ENCODE measurements at regions of chr21 and their contacts with region 1.

Region 1: GRCh38 chr21:45129189-45129923 is 55.0 kb downstream of the ADARB1 start:
- ATAC-seq: peak in 3 of 8 experiments; percentile 28 to 69 (median 59)
- H3K4me3 ChIP-seq: no peak overlapping the region
- H3K27ac ChIP-seq: no peak overlapping the region
- H3K4me1 ChIP-seq: peaks cover 18 to 20% of the 10 kb centered on the region in 2 donors

Region 2: GRCh38 chr21:44939532-44940115 is 189.7 kb before region 1 on chr21 and contains the start of gene SLX9:
- in situ Hi-C with region 1: loop called in 4 of 9 experiments (anchors 10 to 25 kb)
- ATAC-seq: peak; percentile 93 to 98 (median 97)
- H3K4me3 ChIP-seq: peak within 1 kb of the TSS; percentile 67 to 100 (median 74)
- H3K27ac ChIP-seq: peak within 1 kb of the TSS; percentile 62 to 75
- H3K4me1 ChIP-seq: peaks cover 10 to 17% of the 10 kb centered on the region in 2 donors
- total RNA-seq, gene SLX9: 9.8 to 41.2 (median 15.3) TPM

Region 3: DNA sequence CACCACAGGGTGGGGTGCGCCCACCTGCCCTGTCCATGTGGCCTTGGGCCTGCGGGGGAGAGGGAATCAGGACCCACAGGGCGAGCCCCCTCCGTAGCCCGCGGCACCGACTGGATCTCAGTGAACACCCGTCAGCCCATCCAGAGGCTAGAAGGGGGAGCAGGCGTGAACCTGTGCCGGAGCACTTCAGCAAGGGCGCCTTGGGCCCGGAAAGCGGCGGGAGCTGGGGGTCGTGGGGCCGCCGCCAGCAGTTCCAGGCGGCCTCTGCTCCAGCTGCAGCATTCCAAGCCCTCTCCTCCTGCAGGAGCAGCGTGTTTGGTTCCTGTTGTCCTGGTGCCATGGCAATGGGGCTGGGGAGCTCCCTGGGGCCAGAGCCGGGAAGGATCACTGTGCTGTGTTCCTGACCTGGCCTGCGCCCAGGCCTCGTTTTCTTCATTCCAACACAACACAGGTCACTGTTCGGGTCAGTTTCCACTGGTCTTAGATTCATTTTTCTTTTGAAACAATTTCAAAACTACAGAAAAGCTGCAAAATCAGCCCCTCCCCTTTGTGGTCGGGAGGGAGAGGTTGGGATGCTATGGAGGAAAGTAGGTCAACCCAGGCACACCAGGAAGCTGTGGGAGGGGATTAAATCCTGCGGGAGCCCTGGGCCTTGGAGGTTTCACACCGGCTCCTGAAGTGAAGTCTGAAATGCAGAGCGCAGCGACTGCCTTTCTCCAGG is 170.7 kb before region 1 on chr21:
- in situ Hi-C with region 1: loop called in 4 of 9 experiments (anchors 5 to 25 kb)
- ATAC-seq: peak in 7 of 8 experiments; percentile 21 to 82 (median 51)
- H3K4me3 ChIP-seq: no peak overlapping the region
- H3K27ac ChIP-seq: peak overlapping the region in 1 of 2 donors; percentile 40
- H3K4me1 ChIP-seq: peaks cover 0 to 22% of the 10 kb centered on the region in 2 donors

Region 4: DNA sequence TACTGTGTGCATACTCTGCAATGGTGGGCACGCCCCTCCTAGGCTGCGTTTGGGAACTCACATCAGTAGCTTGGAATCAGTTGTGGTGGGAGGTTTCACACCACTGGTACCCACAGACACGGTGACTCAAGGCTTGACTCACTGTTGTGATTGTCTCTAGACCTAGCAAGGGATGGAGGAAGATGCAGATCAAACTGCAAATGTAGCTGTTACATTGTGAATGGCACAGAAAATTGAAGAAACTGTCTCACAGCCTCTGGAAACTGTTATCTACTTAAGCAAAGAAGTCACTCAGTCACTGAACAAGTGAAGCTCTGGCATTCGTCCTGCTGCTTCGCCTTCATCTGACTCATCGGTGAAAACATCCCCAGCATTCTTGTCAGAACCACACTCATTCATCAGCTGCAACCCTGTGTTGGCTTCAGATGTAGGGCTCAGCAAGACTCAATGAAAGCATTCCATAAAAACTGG is 98.8 kb after region 1 on chr21:
- in situ Hi-C with region 1: no loop called
- ATAC-seq: peak; percentile 21 to 92 (median 74)
- H3K4me3 ChIP-seq: no peak overlapping the region
- H3K27ac ChIP-seq: no peak overlapping the region
- H3K4me1 ChIP-seq: no peaks in the 10 kb centered on the region

Region 5: DNA sequence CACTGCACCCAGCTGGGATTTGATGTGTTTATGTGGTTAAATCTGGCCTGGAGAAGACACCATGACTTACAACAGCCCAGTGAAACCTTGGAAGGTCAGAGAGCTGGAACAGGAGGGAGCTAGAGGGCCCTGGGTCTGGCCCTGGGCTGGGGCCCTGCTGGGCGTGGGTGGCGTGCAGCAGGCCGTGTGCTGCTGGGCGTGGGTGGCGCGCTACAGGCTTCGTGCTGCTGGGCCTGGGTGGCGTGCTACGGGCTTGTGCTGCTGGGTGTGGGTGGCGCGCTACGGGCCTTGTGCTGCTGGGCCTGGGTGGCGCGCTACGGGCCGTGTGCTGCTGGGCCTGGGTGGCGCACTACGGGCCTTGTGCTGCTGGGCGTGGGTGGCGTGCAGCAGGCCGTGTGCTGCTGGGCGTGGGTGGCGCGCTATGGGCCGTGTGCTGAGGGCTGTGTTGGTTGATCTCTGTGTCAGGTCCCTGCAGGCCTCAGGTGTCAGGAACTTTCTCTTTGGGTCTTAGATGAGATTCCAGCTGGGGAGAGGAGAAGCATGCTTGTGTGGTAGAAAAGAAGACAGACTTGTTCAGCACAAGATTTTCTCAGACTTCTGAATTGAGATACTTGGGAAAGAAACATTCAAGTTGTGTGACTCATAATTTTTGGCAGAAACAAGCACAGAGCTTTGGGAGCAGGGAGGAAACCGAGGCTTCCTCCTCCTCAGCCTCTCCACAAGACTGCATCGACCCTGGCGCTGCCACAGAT is 341.6 kb after region 1 on chr21:
- in situ Hi-C with region 1: no loop called
- ATAC-seq: peak in 3 of 8 experiments; percentile 85 to 91 (median 90)
- H3K4me3 ChIP-seq: no peak overlapping the region
- H3K27ac ChIP-seq: no peak overlapping the region
- H3K4me1 ChIP-seq: peaks cover 4 to 16% of the 10 kb centered on the region in 2 donors